Heart right ventricle (tissue), 16 donors: ENCODE measurements at regions of chr2 and their contacts with region 1.

Region 1: GRCh38 chr2:96407041-96407918 is 71.7 kb downstream of the NCAPH start:
- DNase-seq: peak; percentile 38 to 67
- ATAC-seq: peak; percentile 34 to 75 (median 66)
- H3K4me3 ChIP-seq: no peak overlapping the region
- H3K27ac ChIP-seq: peak overlapping the region in 5 of 10 donors; percentile 46 to 66 (median 62)
- H3K4me1 ChIP-seq: peaks cover 9 to 33% (median 27%) of the 10 kb centered on the region in 9 donors
- H3K27me3 ChIP-seq: no peaks in the 10 kb centered on the region
- CTCF ChIP-seq: peak; percentile 74 to 90 (median 83)

Region 2: GRCh38 chr2:96344011-96344410 is 63.3 kb before region 1 on chr2:
- intact Hi-C with region 1: no loop called
- DNase-seq: no peak
- ATAC-seq: peak in 3 of 8 donors; percentile 28 to 50 (median 42)
- H3K4me3 ChIP-seq: no peak overlapping the region
- H3K27ac ChIP-seq: peak overlapping the region in 1 of 10 donors; percentile 82
- H3K4me1 ChIP-seq: peaks cover 0 to 8% (median 0%) of the 10 kb centered on the region in 9 donors
- H3K27me3 ChIP-seq: no peaks in the 10 kb centered on the region
- CTCF ChIP-seq: no peak

Region 3: DNA sequence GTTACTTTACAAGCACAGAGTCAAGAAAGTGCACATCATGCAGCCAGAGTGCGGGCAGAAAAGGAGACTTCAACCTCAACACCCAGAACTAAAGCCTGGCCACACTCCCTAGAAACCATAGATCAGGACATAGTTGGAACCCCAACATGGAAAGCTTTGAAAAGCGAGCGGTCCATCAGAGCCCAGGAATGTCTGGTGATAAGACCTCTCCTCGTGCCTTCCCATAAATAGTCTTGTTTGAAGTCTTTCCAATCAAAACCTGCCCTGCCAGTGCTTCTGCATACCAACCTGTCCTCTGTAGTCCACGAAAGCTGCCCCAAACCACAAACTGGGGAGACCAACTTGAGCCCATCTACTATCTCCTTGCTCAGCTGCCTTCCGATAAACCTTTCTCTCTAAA is 42.4 kb after region 1 on chr2:
- intact Hi-C with region 1: no loop called
- DNase-seq: no peak
- ATAC-seq: peak in 5 of 8 donors; percentile 33 to 72 (median 63)
- H3K4me3 ChIP-seq: no peak overlapping the region
- H3K27ac ChIP-seq: peak overlapping the region in 3 of 10 donors; percentile 11 to 53 (median 37)
- H3K4me1 ChIP-seq: peaks cover 0 to 10% (median 0%) of the 10 kb centered on the region in 9 donors
- H3K27me3 ChIP-seq: no peaks in the 10 kb centered on the region
- CTCF ChIP-seq: no peak

Region 4: DNA sequence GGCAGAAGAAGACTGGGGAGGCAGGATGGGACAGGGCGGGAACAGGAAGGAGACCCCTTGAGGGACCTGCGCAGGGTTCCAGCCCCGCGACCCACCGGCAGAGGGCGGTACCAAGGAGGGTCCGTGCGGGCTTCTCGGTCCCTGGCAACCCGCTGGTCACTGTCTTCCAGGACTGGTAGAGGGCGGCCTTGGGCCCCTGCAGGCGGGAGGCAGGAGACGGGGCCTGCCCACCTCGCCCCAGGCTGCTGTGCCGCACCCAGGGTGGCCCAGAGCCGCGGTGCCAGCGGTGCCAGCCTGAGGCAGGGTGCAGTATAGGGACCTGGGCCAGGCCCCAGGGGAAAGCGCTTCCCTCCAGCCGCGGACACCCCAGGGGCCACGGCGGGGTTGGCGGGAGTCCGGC is 63.4 kb after region 1 on chr2:
- intact Hi-C with region 1: loop called in 1 of 10 experiments (anchors 10 kb)
- DNase-seq: peak; percentile 61 to 75
- ATAC-seq: peak; percentile 76 to 93 (median 86)
- H3K4me3 ChIP-seq: peak overlapping the region in 8 of 10 donors; percentile 13 to 45 (median 38)
- H3K27ac ChIP-seq: peak overlapping the region in 1 of 10 donors; percentile 19
- H3K4me1 ChIP-seq: peaks cover 0 to 12% (median 7%) of the 10 kb centered on the region in 9 donors
- H3K27me3 ChIP-seq: peaks cover 0 to 9% (median 0%) of the 10 kb centered on the region in 7 donors
- CTCF ChIP-seq: peak; percentile 38 to 78 (median 69)